RWPE1 (cell line): ENCODE measurements at regions of chr14 and their contacts with region 1.

Region 1: DNA sequence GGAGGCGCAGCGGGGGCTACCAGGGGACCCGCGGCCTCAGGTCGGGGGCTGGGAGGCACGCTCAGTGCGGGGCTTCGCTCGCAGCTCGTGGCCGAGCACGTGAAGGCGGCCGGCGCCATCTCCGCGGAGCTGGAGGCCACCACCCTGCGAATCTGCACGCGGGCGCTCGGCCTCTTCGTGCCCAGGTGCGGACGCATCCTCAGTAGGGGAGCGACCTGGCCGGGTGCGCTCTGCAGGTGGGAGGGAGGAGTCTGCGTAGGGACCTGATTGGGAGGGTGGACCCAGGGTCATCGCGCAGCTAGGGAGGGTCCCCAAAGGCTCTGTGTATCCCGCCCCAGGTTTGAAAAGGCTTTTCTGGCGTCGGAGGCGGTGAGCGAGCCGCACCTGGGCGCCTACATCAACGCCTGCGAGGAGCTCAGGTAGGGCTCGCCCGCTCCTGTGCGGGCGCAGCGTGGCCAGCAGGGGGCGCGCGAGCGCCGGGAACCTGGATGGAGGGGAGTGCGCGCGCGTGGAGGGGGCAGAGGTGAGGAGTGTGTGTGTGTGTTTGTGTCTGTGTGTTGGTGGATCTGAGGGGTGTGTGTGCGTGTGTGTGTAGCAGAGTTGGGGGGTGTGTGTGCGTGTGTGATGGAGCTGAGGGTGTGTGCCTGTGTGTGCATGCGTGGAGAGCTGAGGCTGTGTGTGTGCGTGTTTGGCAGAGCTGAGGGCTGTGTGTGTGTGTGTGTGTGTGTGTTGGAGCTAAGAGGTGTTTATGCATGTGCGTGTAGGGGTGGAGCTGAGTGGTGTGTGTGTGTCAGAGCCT is 10.3 kb downstream of the EXOC3L4 start:
- DNase-seq: peak; percentile 75
- H3K27ac ChIP-seq: peak overlapping the region; percentile 26; the same call in 1 of the 2 replicates
- CTCF ChIP-seq: peak; percentile 96

Region 2: DNA sequence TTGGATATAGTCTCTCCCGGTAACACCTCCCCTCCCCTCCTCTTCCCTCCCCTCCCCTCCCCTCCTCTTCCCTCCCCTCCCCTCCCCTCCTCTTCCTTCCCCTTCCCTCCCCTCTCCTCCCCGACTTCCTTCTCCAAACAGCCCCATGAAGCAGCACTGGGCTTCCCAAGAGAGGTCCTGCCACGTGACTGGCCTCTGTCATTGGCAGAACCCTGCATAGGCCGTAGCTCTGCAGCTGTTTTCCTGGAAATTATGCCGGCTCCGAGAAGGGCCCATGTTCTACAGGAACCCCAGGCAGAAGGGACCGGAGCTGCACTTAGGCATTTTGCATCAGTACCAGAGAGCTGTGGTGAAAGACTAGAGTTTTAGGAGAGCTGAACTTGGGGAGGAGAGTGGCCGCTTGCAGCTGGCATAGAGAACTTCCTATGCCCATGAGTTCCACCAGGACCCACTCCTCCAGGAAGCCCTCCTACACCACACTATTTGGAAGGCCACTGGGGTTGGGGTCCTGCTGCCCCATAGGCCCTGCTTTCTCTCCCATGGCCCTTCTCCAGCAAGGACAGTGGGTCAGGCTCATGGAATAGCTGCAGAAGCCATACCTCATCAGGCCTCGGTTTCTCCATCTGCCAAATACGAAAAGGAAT is 13.3 kb after region 1 on chr14:
- CTCF ChIA-PET with region 1: interaction called, 16 read pairs
- POLR2A ChIA-PET with region 1: no interaction called
- DNase-seq: no peak
- H3K27ac ChIP-seq: no peak overlapping the region
- CTCF ChIP-seq: no peak

Region 3: GRCh38 chr14:103136388-103137271 is 31.8 kb after region 1 on chr14:
- CTCF ChIA-PET with region 1: interaction called, 14 read pairs
- POLR2A ChIA-PET with region 1: no interaction called
- DNase-seq: peak; percentile 69
- H3K27ac ChIP-seq: peak overlapping the region; percentile 74
- CTCF ChIP-seq: no peak

Region 4: DNA sequence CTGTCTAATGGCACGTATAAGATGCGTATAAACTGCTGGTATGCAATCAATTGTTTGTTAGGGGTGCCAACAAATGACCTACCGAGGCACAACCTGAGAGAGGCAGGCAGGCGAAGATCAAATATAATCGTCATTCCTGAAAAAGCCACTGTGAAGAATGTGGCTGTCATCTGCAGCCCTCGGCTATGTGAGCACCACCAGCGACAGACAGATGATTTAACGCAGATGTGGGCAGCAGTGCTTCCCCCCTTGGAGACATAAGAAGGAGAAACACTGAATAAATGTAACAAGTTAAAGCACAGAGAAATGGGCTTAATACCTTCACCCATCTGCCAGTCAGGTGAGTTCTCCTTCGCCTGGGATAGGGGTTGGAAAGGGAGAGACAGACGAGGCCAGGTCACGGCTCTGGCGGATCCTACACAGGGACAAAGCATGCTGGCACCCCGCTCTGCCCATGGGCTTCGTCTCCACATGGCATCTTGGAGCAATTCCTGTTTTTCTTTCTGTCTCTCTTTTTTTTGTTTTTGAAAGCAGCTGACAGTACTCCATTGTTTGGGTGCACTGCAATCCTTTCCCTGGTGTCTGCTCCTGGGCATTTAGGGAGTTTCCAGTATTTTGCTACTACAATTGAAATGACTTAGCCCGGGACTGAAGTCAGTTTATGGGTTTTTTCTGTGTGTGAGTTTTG is 46.5 kb after region 1 on chr14:
- CTCF ChIA-PET with region 1: no interaction called
- POLR2A ChIA-PET with region 1: no interaction called
- DNase-seq: no peak
- H3K27ac ChIP-seq: no peak overlapping the region
- CTCF ChIP-seq: no peak

Region 5: GRCh38 chr14:103292426-103293374 is 187.8 kb after region 1 on chr14:
- CTCF ChIA-PET with region 1: interaction called, 69 read pairs
- POLR2A ChIA-PET with region 1: no interaction called
- DNase-seq: peak; percentile 76
- H3K27ac ChIP-seq: no peak overlapping the region
- CTCF ChIP-seq: peak; percentile 91